Right cardiac atrium (tissue), 5 donors: ENCODE measurements at regions of chr5 and their contacts with region 1.

Region 1: DNA sequence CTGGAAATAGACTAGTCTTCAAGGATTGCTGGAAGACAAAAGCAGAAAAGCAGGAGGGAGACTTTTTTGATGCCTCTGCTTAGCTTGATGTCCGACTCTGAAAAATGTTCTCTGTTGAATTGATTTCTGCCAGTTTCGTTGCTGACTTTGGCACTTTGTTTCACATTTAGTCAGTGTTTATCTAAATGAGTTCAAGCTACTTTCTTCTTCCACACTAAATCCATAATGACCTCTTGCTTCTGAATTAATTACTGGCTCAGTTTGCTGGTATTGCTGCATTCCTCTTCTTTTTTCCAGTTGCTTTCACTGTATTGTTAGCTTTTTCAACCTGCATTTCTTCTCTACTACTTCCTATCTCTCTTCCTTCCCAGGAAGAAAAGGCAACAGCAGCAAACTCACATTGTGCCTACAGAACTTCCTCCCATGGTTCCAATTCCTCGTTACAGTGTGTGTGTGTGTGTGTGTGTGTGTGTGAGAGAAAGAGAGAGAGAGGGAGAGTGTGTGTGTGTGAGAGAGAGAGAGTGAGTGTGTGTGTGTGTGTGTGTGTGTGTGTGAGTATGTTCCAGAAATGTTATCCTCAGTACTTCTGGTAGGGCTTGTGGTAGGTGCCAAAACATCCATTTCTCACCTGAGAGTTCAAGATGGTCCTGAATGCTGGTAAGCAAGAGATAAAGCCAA is 234.8 kb downstream of the CSNK1G3 start:
- DNase-seq: no peak
- ATAC-seq: no peak
- H3K4me3 ChIP-seq: no peak overlapping the region
- H3K27ac ChIP-seq: no peak overlapping the region
- H3K4me1 ChIP-seq: no peaks in the 10 kb centered on the region
- H3K27me3 ChIP-seq: no peaks in the 10 kb centered on the region

Region 2: GRCh38 chr5:123875561-123876283 is 128.9 kb after region 1 on chr5:
- intact Hi-C with region 1: loop called in 1 of 4 experiments (anchors 10 kb)
- DNase-seq: peak; percentile 40 to 64 (median 53)
- ATAC-seq: peak; percentile 85 to 86
- H3K4me3 ChIP-seq: no peak overlapping the region
- H3K27ac ChIP-seq: peak overlapping the region; percentile 93
- H3K4me1 ChIP-seq: peaks cover 16% of the 10 kb centered on the region
- H3K27me3 ChIP-seq: no peaks in the 10 kb centered on the region